PC-9 (cell line): ENCODE measurements at regions of chr3 and their contacts with region 1.

Region 1: DNA sequence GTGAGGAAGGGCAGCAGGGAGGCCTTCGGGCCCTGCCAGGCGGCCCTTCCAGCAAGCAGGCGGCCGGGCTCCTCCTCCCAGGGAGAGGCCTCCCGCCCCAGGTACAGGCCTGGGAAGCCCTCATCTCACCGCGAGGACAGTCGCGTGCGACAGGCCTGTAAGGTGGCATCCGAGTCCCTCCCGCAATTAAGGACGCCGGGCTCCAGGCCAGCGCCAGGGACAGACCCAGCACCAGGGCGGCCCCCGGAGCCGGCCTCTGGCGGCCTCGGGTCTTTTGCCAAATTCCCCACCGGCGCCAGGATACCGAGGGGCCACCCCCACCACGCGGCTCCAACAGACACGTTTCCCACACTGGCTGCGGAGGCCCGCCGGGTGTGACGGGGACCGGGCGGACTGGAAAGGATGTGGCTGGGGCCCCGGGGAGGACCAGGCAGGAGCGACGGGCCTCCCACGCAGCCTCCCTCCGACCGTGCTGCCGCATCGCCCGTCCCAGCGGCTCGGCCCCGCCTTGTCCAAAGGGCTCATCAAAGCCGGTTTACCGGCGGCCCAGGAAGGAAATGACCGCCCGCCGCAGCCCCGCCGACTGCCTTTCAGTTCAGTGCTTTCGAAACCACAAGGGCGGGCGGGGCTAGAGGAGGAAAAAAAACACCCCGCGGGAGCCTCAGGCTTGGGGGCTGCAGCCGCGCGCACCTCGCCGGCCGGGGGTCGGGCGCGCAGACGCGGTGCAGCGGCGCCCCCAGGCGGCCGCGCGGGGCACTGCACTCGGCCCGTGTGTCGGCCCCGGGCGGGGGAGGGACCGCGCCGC is 11.3 kb downstream of the XXYLT1 start:
- DNase-seq: peak; percentile 86 to 96
- H3K4me3 ChIP-seq: peak overlapping the region; percentile 70
- H3K27ac ChIP-seq: peak overlapping the region; percentile 74
- H3K4me1 ChIP-seq: peaks cover 13% of the 10 kb centered on the region
- H3K27me3 ChIP-seq: no peaks in the 10 kb centered on the region
- CTCF ChIP-seq: no peak

Region 2: DNA sequence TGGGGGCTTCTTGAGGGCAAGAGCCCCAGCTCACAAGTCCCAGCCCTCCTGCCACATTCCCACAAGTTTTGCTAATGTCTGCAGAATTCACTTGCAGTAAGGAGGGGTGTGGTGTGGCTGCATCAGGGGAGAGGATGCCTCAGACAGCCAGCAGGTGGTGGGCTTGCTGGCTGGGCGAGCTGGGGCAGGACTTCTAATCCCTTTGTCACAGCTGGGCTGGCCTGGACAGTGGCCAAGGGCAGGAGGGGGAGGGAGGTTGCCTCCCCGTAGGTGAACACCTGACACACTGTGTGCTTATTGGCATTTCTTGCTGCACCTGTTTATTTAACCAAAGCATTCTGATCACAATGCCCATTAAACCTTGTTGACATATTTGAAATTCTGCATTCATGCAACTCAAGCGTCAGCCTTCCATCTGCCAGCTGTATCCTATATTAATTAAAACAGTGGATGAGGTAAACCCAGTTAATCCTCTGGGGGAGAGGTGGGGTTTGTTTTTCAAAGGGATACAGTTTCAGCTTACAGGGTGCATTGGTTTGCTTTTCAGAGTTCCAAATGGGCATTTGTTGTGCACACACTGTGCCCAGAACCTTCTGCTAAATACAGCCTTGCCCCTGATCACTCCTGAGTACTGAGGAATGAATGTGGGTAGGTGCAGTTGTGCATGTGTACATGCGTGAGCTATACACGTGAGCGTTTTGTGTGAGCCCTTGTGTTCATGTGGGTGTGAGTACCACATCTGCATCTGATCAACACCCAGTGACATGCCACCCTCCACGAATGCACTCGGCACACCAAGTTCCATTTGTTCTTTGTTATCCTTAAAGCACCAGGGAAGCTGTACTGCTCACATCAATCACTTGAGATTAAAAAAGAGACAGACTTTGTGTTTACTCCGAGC is 257.5 kb before region 1 on chr3:
- CTCF ChIA-PET with region 1: no interaction called
- POLR2A ChIA-PET with region 1: no interaction called
- intact Hi-C with region 1: loop called (anchors 1 kb)
- DNase-seq: peak; percentile 90 to 92
- H3K4me3 ChIP-seq: no peak overlapping the region
- H3K27ac ChIP-seq: no peak overlapping the region
- H3K4me1 ChIP-seq: peaks cover 25% of the 10 kb centered on the region
- H3K27me3 ChIP-seq: no peaks in the 10 kb centered on the region
- CTCF ChIP-seq: peak; percentile 85

Region 3: GRCh38 chr3:195154793-195155535 is 104.7 kb before region 1 on chr3:
- CTCF ChIA-PET with region 1: no interaction called
- POLR2A ChIA-PET with region 1: no interaction called
- intact Hi-C with region 1: loop called (anchors 10 kb)
- DNase-seq: peak in 1 of 2 experiments; percentile 80
- H3K4me3 ChIP-seq: no peak overlapping the region
- H3K27ac ChIP-seq: no peak overlapping the region
- H3K4me1 ChIP-seq: peaks cover 6% of the 10 kb centered on the region
- H3K27me3 ChIP-seq: no peaks in the 10 kb centered on the region
- CTCF ChIP-seq: no peak

Region 4: DNA sequence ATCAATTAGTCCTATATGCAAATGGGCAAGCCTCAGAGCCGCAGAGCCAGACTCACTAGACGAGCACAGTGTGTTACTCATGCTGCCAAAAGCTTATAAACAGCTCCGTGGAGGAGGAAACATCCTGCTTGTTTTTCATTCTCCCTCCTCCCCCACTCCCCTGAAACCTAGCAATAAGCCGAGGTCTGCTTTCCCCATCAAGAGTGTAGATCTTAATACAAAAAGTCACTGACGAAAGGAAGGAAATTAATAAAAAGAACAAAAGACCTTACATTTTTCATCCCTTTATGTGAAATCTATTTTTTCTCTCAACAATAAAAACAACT is 77.2 kb before region 1 on chr3:
- CTCF ChIA-PET with region 1: no interaction called
- POLR2A ChIA-PET with region 1: no interaction called
- intact Hi-C with region 1: no loop called
- DNase-seq: no peak
- H3K4me3 ChIP-seq: no peak overlapping the region
- H3K27ac ChIP-seq: no peak overlapping the region
- H3K4me1 ChIP-seq: peaks cover 23% of the 10 kb centered on the region
- H3K27me3 ChIP-seq: no peaks in the 10 kb centered on the region
- CTCF ChIP-seq: no peak